ENCODE measurements at regions of chr16 and their contacts with region 1.

Region 1: GRCh38 chr16:79261481-79261940 is 339.0 kb downstream of the MAF start:
- DNase-seq: peak; percentile 21
- H3K4me3 ChIP-seq: no peak overlapping the region
- H3K27ac ChIP-seq: no peak overlapping the region
- H3K4me1 ChIP-seq: no peaks in the 10 kb centered on the region
- H3K27me3 ChIP-seq: no peaks in the 10 kb centered on the region
- CTCF ChIP-seq: peak; percentile 61

Region 2: DNA sequence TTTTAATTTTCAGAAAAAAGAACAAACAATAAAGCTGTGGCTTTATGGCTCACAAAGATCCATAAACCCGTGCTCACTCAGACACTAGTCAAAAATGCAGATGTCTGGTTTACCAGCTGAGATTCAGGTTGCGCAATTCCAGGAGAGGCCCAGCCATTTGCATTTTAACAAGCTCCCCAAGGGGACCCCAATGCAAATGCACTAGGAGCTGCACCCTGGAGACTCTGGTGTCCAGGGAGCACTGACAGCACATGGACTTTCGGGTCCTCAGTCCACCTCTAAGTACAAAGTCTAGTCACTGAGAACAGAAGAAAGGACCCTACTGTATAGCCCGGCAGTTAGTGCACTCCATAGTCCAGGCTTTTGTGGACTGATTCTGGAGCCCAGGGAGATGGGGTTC is 12.8 kb after region 1 on chr16:
- CTCF ChIA-PET with region 1: interaction called, 11 read pairs
- POLR2A ChIA-PET with region 1: no interaction called
- intact Hi-C with region 1: no loop called
- DNase-seq: no peak
- H3K4me3 ChIP-seq: no peak overlapping the region
- H3K27ac ChIP-seq: no peak overlapping the region
- H3K4me1 ChIP-seq: no peaks in the 10 kb centered on the region
- H3K27me3 ChIP-seq: no peaks in the 10 kb centered on the region
- CTCF ChIP-seq: no peak